AG04449 (cell line): ENCODE measurements at regions of chr12 and their contacts with region 1.

Region 1: GRCh38 chr12:57151741-57152630 is 4.6 kb upstream of the LRP1-AS start:
- DNase-seq: no peak
- H3K4me3 ChIP-seq: peak overlapping the region; percentile 6; the same call in 1 of the 2 replicates
- CTCF ChIP-seq: no peak

Region 2: GRCh38 chr12:57078519-57079404 is 73.2 kb before region 1 on chr12 and contains the start of gene NEMP1:
- CTCF ChIA-PET with region 1: no interaction called
- POLR2A ChIA-PET with region 1: no interaction called
- DNase-seq: peak; percentile 100
- H3K4me3 ChIP-seq: peak within 1 kb of the TSS; percentile 77
- CTCF ChIP-seq: no peak

Region 3: GRCh38 chr12:57135527-57136326 is 16.3 kb before region 1 on chr12:
- CTCF ChIA-PET with region 1: interaction called, 16 read pairs
- POLR2A ChIA-PET with region 1: interaction called, 10 read pairs
- DNase-seq: no peak
- H3K4me3 ChIP-seq: peak overlapping the region; percentile 27
- CTCF ChIP-seq: no peak